ENCODE measurements at regions of chr7 and their contacts with region 1.

Region 1: GRCh38 chr7:92833024-92833765 is 3.2 kb downstream of the CDK6 start:
- DNase-seq: peak; percentile 90
- H3K4me3 ChIP-seq: peak overlapping the region; percentile 80 to 88
- H3K27ac ChIP-seq: peak overlapping the region; percentile 95 to 96
- H3K4me1 ChIP-seq: peaks cover 34 to 40% of the 10 kb centered on the region in 2 experiments; a peak in 3 of 4 replicates
- H3K27me3 ChIP-seq: no peaks in the 10 kb centered on the region
- CTCF ChIP-seq: peak; percentile 82
- EP300 ChIP-seq: peak in 1 of 2 experiments; percentile 24; a peak in 1 of 4 replicates
- RAD21 ChIP-seq: peak; percentile 84

Region 2: DNA sequence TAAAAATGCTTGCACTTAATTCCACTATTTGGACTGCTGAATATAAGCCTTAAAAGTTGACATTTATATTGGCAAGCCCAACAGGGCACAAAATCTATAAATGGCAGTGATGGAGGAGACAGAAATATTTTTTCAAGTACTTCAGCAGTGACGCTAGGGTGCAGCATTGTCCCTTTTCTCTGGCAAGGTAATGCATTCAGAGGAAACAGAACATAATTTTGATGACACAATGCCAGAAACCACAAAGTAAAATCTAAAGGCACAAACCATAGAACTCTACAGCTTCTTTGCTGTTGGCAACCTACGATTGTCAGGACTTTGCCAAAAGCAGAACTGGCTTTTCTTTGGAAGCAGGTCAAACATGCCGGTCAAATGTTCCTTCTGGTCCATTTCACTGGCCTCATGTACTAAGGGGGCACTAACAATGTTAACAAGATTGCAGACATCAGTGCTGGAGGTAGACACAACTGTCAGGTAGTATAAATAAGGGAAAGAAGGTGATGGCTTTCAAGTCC is 212.1 kb before region 1 on chr7:
- CTCF ChIA-PET with region 1: interaction called, 96 read pairs
- POLR2A ChIA-PET with region 1: interaction called, 3 read pairs
- DNase-seq: peak; percentile 53
- H3K4me3 ChIP-seq: peak overlapping the region in 1 of 2 experiments; percentile 20; a peak in 2 of 4 replicates
- H3K27ac ChIP-seq: peak overlapping the region; percentile 81 to 83
- H3K4me1 ChIP-seq: peaks cover 9 to 29% of the 10 kb centered on the region in 2 experiments
- H3K27me3 ChIP-seq: no peaks in the 10 kb centered on the region
- CTCF ChIP-seq: peak; percentile 97
- EP300 ChIP-seq: peak; percentile 55 to 69; a peak in 1 of 4 replicates
- RAD21 ChIP-seq: peak; percentile 99

Region 3: GRCh38 chr7:92655346-92655884 is 177.8 kb before region 1 on chr7:
- CTCF ChIA-PET with region 1: interaction called, 11 read pairs
- POLR2A ChIA-PET with region 1: no interaction called
- DNase-seq: no peak
- H3K4me3 ChIP-seq: no peak overlapping the region
- H3K27ac ChIP-seq: no peak overlapping the region
- H3K4me1 ChIP-seq: peaks cover 0 to 6% of the 10 kb centered on the region in 2 experiments; a peak in 2 of 4 replicates
- H3K27me3 ChIP-seq: no peaks in the 10 kb centered on the region
- CTCF ChIP-seq: no peak
- EP300 ChIP-seq: no peak
- RAD21 ChIP-seq: no peak

Region 4: GRCh38 chr7:92754919-92755581 is 78.1 kb before region 1 on chr7:
- CTCF ChIA-PET with region 1: interaction called, 15 read pairs
- POLR2A ChIA-PET with region 1: no interaction called
- DNase-seq: peak; percentile 45
- H3K4me3 ChIP-seq: no peak overlapping the region
- H3K27ac ChIP-seq: peak overlapping the region; percentile 80 to 98
- H3K4me1 ChIP-seq: peaks cover 31 to 34% of the 10 kb centered on the region in 2 experiments
- H3K27me3 ChIP-seq: no peaks in the 10 kb centered on the region
- CTCF ChIP-seq: no peak
- EP300 ChIP-seq: peak in 1 of 2 experiments; percentile 82; a peak in 2 of 4 replicates
- RAD21 ChIP-seq: 0 out of 2 replicates have a peak, but pooled peaks have one; percentile 1

Region 5: DNA sequence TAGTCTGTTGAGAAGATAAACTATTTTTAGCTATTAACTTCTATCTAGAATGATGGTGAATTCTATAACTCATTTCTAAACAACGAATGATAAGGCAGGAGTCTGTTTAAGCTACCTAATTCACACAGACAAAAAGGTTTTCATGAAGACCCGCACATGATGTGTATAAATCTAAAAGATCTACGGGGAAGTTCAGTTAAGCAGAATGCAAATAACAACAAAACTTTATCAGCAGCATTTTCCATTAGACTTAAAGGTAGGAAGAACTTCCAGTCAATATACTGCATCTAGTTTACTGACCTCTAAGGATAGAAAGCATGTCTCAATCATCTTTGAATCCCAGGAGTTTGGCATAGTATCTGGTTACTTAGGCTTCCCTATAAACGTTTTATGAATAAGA is 59.4 kb before region 1 on chr7:
- CTCF ChIA-PET with region 1: interaction called, 73 read pairs
- POLR2A ChIA-PET with region 1: interaction called, 15 read pairs
- DNase-seq: no peak
- H3K4me3 ChIP-seq: no peak overlapping the region
- H3K27ac ChIP-seq: peak overlapping the region in 1 of 2 experiments; percentile 4; a peak in 1 of 4 replicates
- H3K4me1 ChIP-seq: peaks cover 18 to 42% of the 10 kb centered on the region in 2 experiments
- H3K27me3 ChIP-seq: no peaks in the 10 kb centered on the region
- CTCF ChIP-seq: no peak
- EP300 ChIP-seq: no peak
- RAD21 ChIP-seq: no peak

Region 6: DNA sequence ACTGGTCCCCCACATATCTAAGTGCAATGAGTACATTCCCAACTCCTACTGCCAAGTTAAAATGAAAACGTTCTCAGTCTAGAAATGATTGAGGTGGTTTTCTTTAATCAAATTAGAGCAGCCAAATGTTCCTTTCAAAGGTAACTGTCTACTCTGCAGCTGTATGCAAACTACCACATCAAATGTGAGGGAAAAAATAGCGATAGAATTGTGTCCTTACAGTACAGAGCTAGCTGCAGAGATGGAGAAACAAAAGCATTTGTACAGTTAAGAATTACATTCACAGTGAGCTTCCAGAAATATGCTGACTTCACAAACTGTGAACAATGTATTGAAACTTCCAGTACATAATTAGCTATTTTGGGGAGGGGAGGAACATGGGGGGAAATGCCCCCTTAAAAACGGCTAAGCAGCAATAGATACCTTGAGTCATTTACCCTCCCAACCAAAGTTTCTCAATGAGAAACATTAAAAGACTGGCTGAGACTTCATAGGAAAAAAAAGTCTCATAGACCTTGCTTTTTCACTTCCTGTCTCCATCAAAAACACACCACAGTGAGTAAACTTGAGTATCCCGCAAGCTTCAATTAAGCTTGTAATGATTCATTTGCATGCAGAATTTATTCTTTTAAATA is 19.7 kb before region 1 on chr7:
- CTCF ChIA-PET with region 1: interaction called, 25 read pairs
- POLR2A ChIA-PET with region 1: no interaction called
- DNase-seq: no peak
- H3K4me3 ChIP-seq: no peak overlapping the region
- H3K27ac ChIP-seq: peak overlapping the region; percentile 11 to 52; a peak in 2 of 4 replicates
- H3K4me1 ChIP-seq: peaks cover 12 to 26% of the 10 kb centered on the region in 2 experiments
- H3K27me3 ChIP-seq: no peaks in the 10 kb centered on the region
- CTCF ChIP-seq: no peak
- EP300 ChIP-seq: no peak
- RAD21 ChIP-seq: no peak

Region 7: DNA sequence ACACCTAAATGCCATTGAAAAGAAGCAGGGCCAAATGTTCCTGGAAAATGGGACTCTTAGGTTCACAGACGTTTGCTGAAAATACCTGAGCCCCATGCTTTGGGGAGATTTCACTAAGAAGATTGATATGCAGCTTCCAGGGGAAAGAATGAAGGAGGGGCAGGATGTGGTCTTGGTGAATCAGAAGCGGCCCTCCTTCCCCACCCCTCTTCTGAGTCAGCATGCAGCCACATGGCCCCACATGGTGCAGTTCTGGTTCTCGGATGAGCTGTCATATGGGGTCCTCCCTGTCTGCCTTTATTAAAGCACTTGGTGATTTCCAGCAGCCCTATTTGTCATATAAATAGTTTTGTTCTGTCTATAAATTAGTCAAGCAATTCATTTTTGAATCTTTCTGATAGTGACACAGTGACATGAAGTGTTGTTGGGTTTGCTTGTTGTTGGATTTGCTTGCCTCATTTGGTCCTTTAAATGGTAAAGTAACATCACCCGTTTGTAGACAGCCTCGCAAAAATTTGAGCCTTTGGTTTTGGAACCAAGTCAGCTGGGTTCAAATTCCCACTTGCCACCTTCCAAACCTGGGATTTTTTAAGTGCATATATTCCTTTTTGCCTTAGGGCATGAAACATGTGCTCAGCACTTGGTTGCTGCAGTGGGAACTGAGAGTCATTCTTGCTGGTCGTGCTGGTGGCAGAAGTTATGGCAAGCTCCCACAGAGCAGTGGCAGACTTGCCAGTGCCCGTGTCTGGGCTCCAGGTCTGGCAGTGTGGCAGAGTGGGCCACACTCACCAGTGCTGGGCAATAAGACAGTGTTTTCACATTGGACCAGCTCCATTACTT is 71.3 kb after region 1 on chr7:
- CTCF ChIA-PET with region 1: no interaction called
- POLR2A ChIA-PET with region 1: no interaction called
- DNase-seq: peak; percentile 27
- H3K4me3 ChIP-seq: no peak overlapping the region
- H3K27ac ChIP-seq: peak overlapping the region; percentile 41 to 56; a peak in 3 of 4 replicates
- H3K4me1 ChIP-seq: peaks cover 4 to 6% of the 10 kb centered on the region in 2 experiments; a peak in 3 of 4 replicates
- H3K27me3 ChIP-seq: no peaks in the 10 kb centered on the region
- CTCF ChIP-seq: no peak
- EP300 ChIP-seq: peak; percentile 8 to 97; a peak in 3 of 4 replicates
- RAD21 ChIP-seq: no peak

Measured in SK-N-SH (cell line).